ENCODE measurements at regions of chr5 and their contacts with region 1.

Region 1: GRCh38 chr5:135944967-135945560 is 9.7 kb downstream of the LECT2 start:
- DNase-seq: peak; percentile 45
- ATAC-seq: no peak
- H3K4me3 Mint-ChIP-seq: no peak overlapping the region
- H3K27ac Mint-ChIP-seq: no peak overlapping the region
- H3K4me1 Mint-ChIP-seq: no peaks in the 10 kb centered on the region
- H3K27me3 Mint-ChIP-seq: peaks cover 18% of the 10 kb centered on the region

Region 2: DNA sequence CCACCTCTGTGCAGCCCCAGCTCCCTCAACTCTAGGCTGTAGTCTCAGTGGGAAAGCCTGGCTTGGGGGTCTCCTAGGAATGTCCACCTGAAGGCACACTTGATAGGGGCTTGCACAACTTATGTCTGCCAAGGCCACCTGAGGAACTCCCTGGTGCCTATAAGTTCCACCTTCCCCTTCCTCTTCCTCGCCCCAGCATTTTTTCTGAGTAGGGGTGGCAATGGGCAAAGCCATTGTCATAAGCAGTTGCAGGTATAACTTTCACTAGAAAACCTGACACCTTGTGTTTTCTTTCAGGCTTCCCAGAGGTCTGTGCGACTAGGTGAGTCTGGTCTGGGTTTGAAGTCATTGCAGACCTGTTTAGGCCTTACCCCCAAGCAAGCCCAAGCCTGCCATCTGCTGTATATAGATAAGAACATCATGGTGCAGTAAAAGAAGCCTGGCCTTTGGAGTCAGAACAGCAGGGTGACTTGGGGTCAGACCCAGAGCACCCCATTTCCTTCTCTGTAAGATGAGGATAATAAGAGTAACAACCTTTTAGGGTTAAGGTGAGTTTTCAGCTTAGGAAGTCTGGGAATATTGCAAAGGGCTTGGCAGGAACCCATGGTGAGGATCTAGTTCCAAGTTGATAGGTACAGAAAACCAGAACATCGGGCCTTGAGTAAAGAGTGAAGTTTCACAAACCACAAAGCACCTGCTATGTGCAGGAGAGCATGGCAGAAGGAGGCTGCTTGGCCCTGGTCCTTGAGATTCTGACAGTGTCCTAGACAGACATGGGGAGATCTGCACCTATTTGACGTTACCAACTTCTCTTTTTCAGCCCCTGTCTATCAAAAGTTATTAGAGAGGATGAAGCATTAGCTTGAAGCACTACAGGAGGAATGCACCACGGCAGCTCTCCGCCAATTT is 117.6 kb after region 1 on chr5:
- CTCF ChIA-PET with region 1: interaction called, 4 read pairs
- POLR2A ChIA-PET with region 1: no interaction called
- intact Hi-C with region 1: loop called (anchors 1 kb)
- DNase-seq: peak; percentile 51
- ATAC-seq: peak; percentile 86
- H3K4me3 Mint-ChIP-seq: no peak overlapping the region
- H3K27ac Mint-ChIP-seq: no peak overlapping the region
- H3K4me1 Mint-ChIP-seq: no peaks in the 10 kb centered on the region
- H3K27me3 Mint-ChIP-seq: peaks cover 2% of the 10 kb centered on the region

Region 3: DNA sequence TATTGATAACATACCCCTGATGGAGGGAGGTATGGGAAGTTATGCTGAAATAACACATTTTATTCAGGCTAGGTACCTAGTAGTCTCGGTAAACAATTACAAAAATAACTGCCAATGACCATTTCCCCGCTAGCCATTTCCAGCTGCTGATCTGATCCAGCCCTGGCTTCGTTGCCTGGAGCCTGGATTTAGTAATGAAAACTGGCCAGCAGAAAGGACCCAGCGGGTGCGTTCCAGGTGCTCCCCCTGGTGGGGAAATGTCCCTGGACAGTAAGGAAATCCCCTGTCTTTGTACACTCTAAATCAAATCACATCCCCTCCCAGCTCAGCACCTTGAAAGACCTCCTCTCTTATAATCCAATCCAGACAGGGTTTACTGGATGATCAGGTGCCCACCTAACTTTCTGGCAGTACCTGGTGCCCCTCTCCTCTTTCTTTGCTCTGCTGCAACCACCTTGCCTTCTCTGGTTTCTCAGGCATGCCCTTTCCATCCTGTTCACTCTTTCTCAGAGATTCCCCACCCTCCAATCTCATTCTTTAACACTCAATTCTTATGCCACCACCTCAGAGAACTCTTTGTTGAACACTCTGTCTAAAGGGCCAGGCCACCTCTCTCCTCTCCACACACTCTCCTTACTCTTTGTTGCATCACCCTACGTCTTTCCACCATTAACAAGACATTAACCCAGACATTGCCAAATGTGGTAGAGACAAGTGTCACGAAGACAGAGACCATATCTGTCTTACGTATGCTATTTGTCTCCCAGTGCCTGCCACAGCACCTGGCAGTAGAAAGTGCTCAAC is 137.5 kb after region 1 on chr5:
- CTCF ChIA-PET with region 1: interaction called, 6 read pairs
- POLR2A ChIA-PET with region 1: no interaction called
- intact Hi-C with region 1: loop called (anchors 1 kb)
- DNase-seq: peak; percentile 76
- ATAC-seq: no peak
- H3K4me3 Mint-ChIP-seq: no peak overlapping the region
- H3K27ac Mint-ChIP-seq: no peak overlapping the region
- H3K4me1 Mint-ChIP-seq: peaks cover 3% of the 10 kb centered on the region
- H3K27me3 Mint-ChIP-seq: peaks cover 24% of the 10 kb centered on the region

Region 4: GRCh38 chr5:136174021-136174659 is 229.1 kb after region 1 on chr5:
- CTCF ChIA-PET with region 1: no interaction called
- POLR2A ChIA-PET with region 1: no interaction called
- intact Hi-C with region 1: loop called (anchors 1 to 5 kb)
- DNase-seq: no peak
- ATAC-seq: no peak
- H3K4me3 Mint-ChIP-seq: no peak overlapping the region
- H3K27ac Mint-ChIP-seq: no peak overlapping the region
- H3K4me1 Mint-ChIP-seq: no peaks in the 10 kb centered on the region
- H3K27me3 Mint-ChIP-seq: peaks cover 2% of the 10 kb centered on the region

Region 5: GRCh38 chr5:136212252-136212721 is 267.2 kb after region 1 on chr5:
- CTCF ChIA-PET with region 1: interaction called, 3 read pairs
- POLR2A ChIA-PET with region 1: no interaction called
- intact Hi-C with region 1: loop called (anchors 1 kb)
- DNase-seq: peak; percentile 72
- ATAC-seq: no peak
- H3K4me3 Mint-ChIP-seq: no peak overlapping the region
- H3K27ac Mint-ChIP-seq: no peak overlapping the region
- H3K4me1 Mint-ChIP-seq: no peaks in the 10 kb centered on the region
- H3K27me3 Mint-ChIP-seq: peaks cover 28% of the 10 kb centered on the region

Measured in activated CD4-positive, alpha-beta T cell treated with anti-CD3 and anti-CD28 coated beads for 36 hours (primary cell).